ENCODE measurements at regions of chr20 and their contacts with region 1.

Region 1: GRCh38 chr20:24851346-24852019 is 97.6 kb upstream of the CST7 start:
- DNase-seq: no peak
- ATAC-seq: no peak
- H3K4me3 ChIP-seq: no peak overlapping the region
- H3K4me3 Mint-ChIP-seq: no peak overlapping the region
- H3K27ac ChIP-seq: no peak overlapping the region
- H3K27ac Mint-ChIP-seq: no peak overlapping the region
- H3K4me1 ChIP-seq: no peaks in the 10 kb centered on the region
- H3K4me1 Mint-ChIP-seq: no peaks in the 10 kb centered on the region
- H3K27me3 ChIP-seq: peaks cover 0 to 3% of the 10 kb centered on the region in 2 experiments
- H3K27me3 Mint-ChIP-seq: peaks cover 22% of the 10 kb centered on the region
- CTCF ChIP-seq: no peak

Region 2: DNA sequence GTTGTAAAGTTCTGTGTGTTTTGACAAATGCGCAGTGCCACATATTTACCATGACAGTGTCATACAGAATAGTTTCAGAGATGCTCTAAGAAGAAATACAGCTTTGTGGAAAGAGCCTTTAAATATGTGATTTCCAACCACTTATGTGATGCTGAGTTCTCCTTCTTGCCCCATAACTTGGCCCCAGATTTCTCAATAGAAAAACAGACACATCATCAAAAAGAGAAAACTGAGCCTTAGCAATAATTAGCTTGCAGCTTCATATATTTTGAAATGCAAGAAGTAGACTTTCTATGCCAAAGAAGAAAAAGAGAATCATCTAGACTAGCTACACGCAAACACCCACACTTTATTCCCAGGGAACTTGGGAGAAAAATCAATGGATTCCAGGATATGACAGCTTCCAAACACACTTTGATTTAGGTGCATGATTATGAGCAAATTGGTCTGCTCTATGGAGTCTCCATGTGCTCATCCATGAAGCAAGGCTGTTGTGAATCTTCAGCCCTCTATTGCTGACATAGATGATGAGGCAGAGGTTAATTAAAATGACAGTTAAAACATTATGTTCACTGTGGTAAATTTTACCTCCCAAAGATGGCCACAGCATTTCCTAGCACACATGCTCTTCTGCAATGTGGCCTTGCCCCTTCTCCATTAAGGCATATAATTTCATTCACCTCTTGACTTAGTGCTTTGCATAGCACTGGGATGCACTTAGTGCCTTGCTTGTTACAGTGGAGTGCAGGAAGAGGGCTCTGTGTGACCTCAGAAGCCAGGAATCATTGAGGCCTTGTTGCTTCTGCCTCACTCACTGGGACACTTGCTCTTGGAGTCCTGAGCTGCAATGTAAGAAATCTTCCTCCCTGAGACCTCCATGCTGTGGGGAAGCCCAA is 207.5 kb before region 1 on chr20:
- CTCF ChIA-PET with region 1: no interaction called
- POLR2A ChIA-PET with region 1: no interaction called
- intact Hi-C with region 1: loop called in 1 of 2 experiments (anchors 5 kb)
- DNase-seq: no peak
- ATAC-seq: no peak
- H3K4me3 ChIP-seq: no peak overlapping the region
- H3K4me3 Mint-ChIP-seq: no peak overlapping the region
- H3K27ac ChIP-seq: no peak overlapping the region
- H3K27ac Mint-ChIP-seq: no peak overlapping the region
- H3K4me1 ChIP-seq: peaks cover 3% of the 10 kb centered on the region
- H3K4me1 Mint-ChIP-seq: peaks cover 6% of the 10 kb centered on the region
- H3K27me3 ChIP-seq: peaks cover 0 to 3% of the 10 kb centered on the region in 2 experiments
- H3K27me3 Mint-ChIP-seq: peaks cover 5% of the 10 kb centered on the region
- CTCF ChIP-seq: no peak

Measured in CD8-positive, alpha-beta T cell (primary cell).